Sigmoid colon (tissue), 7 donors: ENCODE measurements at regions of chrX and their contacts with region 1.

Region 1: GRCh38 chrX:100512471-100512870 is 72.3 kb upstream of the TNMD start:
- DNase-seq: no peak
- H3K4me3 ChIP-seq: no peak overlapping the region
- H3K27ac ChIP-seq: no peak overlapping the region
- H3K4me1 ChIP-seq: no peaks in the 10 kb centered on the region
- H3K27me3 ChIP-seq: no peaks in the 10 kb centered on the region
- CTCF ChIP-seq: peak; percentile 23 to 57 (median 33)
- EP300 ChIP-seq: no peak
- POLR2A ChIP-seq: no peak

Region 2: GRCh38 chrX:100600758-100601157 is 88.3 kb after region 1 on chrX:
- intact Hi-C with region 1: no loop called
- DNase-seq: no peak
- H3K4me3 ChIP-seq: no peak overlapping the region
- H3K27ac ChIP-seq: no peak overlapping the region
- H3K4me1 ChIP-seq: peaks cover 0 to 13% (median 0%) of the 10 kb centered on the region in 4 donors
- H3K27me3 ChIP-seq: no peaks in the 10 kb centered on the region
- CTCF ChIP-seq: no peak
- EP300 ChIP-seq: no peak
- POLR2A ChIP-seq: no peak

Region 3: GRCh38 chrX:100636321-100636991 is 124.0 kb after region 1 on chrX and contains the start of gene TSPAN6:
- intact Hi-C with region 1: loop called (anchors 10 kb)
- DNase-seq: peak; percentile 84
- H3K4me3 ChIP-seq: peak within 1 kb of the TSS; percentile 34 to 58 (median 50)
- H3K27ac ChIP-seq: peak within 1 kb of the TSS; percentile 56 to 69 (median 58)
- H3K4me1 ChIP-seq: peaks cover 0 to 6% (median 0%) of the 10 kb centered on the region in 4 donors
- H3K27me3 ChIP-seq: no peaks in the 10 kb centered on the region
- CTCF ChIP-seq: peak in 2 of 4 experiments; percentile 8 to 44
- EP300 ChIP-seq: no peak
- POLR2A ChIP-seq: no peak
- total RNA-seq, gene TSPAN6: 7.5 to 16.3 (median 9.4) TPM

Region 4: GRCh38 chrX:100685284-100685996 is 173.0 kb after region 1 on chrX:
- intact Hi-C with region 1: loop called (anchors 10 kb)
- DNase-seq: peak; percentile 86
- H3K4me3 ChIP-seq: no peak overlapping the region
- H3K27ac ChIP-seq: peak overlapping the region; percentile 37 to 56 (median 40)
- H3K4me1 ChIP-seq: peaks cover 0 to 17% (median 10%) of the 10 kb centered on the region in 4 donors
- H3K27me3 ChIP-seq: no peaks in the 10 kb centered on the region
- CTCF ChIP-seq: peak; percentile 74 to 97 (median 91)
- EP300 ChIP-seq: no peak
- POLR2A ChIP-seq: no peak

Region 5: GRCh38 chrX:100768679-100769338 is 256.3 kb after region 1 on chrX:
- intact Hi-C with region 1: loop called (anchors 5 kb)
- DNase-seq: peak; percentile 92
- H3K4me3 ChIP-seq: no peak overlapping the region
- H3K27ac ChIP-seq: no peak overlapping the region
- H3K4me1 ChIP-seq: no peaks in the 10 kb centered on the region
- H3K27me3 ChIP-seq: no peaks in the 10 kb centered on the region
- CTCF ChIP-seq: peak; percentile 94 to 98 (median 98)
- EP300 ChIP-seq: no peak
- POLR2A ChIP-seq: no peak